ENCODE measurements at regions of chr20 and their contacts with region 1.

Region 1: GRCh38 chr20:35146920-35147574 is at the start of gene EDEM2:
- DNase-seq: peak; percentile 94 to 95
- H3K4me3 ChIP-seq: peak within 1 kb of the TSS; percentile 64 to 73
- H3K27ac ChIP-seq: peak within 1 kb of the TSS; percentile 80 to 81
- H3K4me1 ChIP-seq: peaks cover 6 to 9% of the 10 kb centered on the region in 2 donors
- H3K27me3 ChIP-seq: no peaks in the 10 kb centered on the region
- CTCF ChIP-seq: peak in 2 of 4 experiments; percentile 9 to 37
- POLR2A ChIP-seq: peak in 1 of 2 donors; percentile 45
- total RNA-seq, gene EDEM2: 2.6 to 18.5 (median 13.3) TPM

Region 2: GRCh38 chr20:35207950-35208611 is 61.0 kb after region 1 on chr20:
- intact Hi-C with region 1: loop called (anchors 2 kb)
- DNase-seq: peak; percentile 74 to 88
- H3K4me3 ChIP-seq: no peak overlapping the region
- H3K27ac ChIP-seq: peak overlapping the region; percentile 61 to 65
- H3K4me1 ChIP-seq: no peaks in the 10 kb centered on the region
- H3K27me3 ChIP-seq: no peaks in the 10 kb centered on the region
- CTCF ChIP-seq: peak; percentile 65 to 95 (median 79)
- POLR2A ChIP-seq: no peak

Region 3: DNA sequence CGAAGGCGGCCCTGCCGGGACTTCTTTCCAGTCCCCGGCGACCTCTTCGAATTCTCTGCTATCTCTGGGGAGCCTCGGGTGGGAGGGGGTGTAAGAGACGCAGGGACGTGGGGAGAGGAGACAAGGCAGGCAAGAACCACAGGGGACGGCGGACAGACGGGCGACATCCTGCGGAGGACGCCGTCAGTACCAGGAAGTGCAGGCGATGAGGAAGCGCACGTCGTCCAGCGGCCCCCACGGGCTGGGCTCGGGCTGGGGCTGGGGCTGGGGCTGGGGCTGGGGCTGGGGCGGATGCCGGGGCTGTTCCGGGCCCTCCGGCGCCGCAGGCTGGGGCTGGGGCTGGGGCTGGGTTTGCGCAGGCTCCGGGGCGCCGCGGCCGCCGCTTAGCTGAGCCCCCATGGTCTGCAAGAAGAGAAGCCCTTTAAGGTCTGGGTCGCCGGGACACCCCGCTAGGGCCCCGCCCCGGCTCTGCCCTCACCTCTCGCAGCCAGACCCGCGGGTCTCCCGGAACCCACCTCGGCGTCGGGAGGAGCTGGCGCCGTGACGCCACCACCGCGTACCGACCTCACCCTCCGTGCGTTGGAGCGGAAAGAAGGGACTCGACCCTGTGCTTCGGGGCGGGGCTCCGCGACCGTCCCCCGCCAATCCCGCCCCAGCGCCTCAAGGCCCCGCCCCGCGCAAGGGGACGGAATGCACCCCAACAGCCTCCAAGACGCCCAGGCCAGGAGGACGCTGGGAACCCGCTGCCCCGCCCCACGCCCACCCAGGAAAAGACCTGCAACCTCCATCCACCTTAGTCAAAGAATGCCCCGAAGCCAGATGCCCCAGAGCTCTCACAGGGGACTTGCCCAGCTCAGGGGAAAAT is 130.7 kb after region 1 on chr20 and contains the start of gene MMP24OS:
- intact Hi-C with region 1: loop called (anchors 10 kb)
- DNase-seq: peak; percentile 85 to 86
- H3K4me3 ChIP-seq: peak within 1 kb of the TSS; percentile 57 to 72
- H3K27ac ChIP-seq: peak within 1 kb of the TSS; percentile 88 to 96
- H3K4me1 ChIP-seq: peaks cover 0 to 13% of the 10 kb centered on the region in 2 donors
- H3K27me3 ChIP-seq: no peaks in the 10 kb centered on the region
- CTCF ChIP-seq: peak in 2 of 4 experiments; percentile 29 to 51
- POLR2A ChIP-seq: peak; percentile 91 to 94
- total RNA-seq, gene MMP24OS: 8.8 to 67.8 (median 18.1) TPM

Region 4: GRCh38 chr20:35699127-35699975 is 552.3 kb after region 1 on chr20 and contains the starts of genes NFS1 and ROMO1:
- intact Hi-C with region 1: no loop called
- DNase-seq: peak; percentile 81 to 86
- H3K4me3 ChIP-seq: peak within 1 kb of the TSS; percentile 78 to 94
- H3K27ac ChIP-seq: peak within 1 kb of the TSS; percentile 82 to 91
- H3K4me1 ChIP-seq: peaks cover 0 to 14% of the 10 kb centered on the region in 2 donors
- H3K27me3 ChIP-seq: no peaks in the 10 kb centered on the region
- CTCF ChIP-seq: peak; percentile 21 to 52 (median 36)
- POLR2A ChIP-seq: peak; percentile 36 to 68
- total RNA-seq, gene NFS1: 9.1 to 35.4 (median 20.4) TPM
- total RNA-seq, gene ROMO1: 69.3 to 492 (median 171) TPM

Measured in uterus (tissue), 4 donors.